A549 (cell line): ENCODE measurements at regions of chr12 and their contacts with region 1.

Region 1: DNA sequence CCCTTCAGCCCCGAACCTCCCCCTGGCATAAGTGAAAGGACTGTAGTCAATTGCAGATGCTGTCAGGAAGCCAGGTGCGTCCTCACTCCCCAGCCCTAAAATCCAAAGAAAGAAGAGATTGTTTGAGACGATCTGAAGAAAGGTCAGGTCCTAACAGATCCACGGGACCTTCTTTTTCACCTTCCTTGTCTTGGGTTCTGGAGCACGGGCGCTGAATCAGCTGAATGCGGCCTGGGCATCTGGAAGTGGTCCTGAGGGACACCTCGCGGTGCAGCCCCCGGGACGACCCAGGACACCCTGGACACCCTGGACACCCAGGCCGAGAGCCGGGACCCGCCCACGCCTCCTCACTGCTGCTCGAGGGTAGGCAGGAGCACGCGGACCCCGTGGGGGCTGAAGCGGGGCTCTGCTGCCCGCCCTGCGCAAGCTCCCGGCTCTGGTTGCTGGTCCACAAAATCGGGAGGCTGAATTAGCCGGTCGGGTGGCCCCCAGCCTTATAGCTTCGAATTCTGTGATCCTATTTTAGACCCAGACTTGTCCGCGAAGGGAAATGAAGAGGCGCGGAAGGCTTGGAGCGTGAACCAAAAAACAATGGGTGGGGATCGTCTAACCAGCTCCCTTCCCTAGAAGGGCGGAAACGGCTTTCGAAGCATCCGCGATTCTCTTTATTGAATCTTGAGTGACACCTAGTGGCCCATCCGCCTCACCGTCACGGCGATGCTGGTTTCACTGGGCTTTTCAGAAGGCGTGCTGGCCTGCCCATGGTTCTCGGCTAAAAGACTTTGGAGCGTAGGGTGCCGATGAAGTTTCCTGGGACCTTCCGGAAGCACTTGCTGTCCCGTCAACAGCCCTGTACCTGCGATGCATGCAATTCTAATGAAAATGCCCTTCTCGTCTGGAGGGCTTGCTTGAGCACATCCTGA is 46.4 kb upstream of the PLXNC1 start:
- DNase-seq: peak; percentile 66 to 90
- ATAC-seq: peak; percentile 78 to 90
- H3K4me3 ChIP-seq: peak overlapping the region; percentile 61
- H3K27ac ChIP-seq: peak overlapping the region; percentile 77 to 85
- H3K4me1 ChIP-seq: peaks cover 28% of the 10 kb centered on the region; the same call in 2 of the 3 replicates
- CTCF ChIP-seq: peak; percentile 77
- EP300 ChIP-seq: no peak
- POLR2A ChIP-seq: no peak
- RAD21 ChIP-seq: peak; percentile 93

Region 2: GRCh38 chr12:92987362-92987761 is 1114.6 kb before region 1 on chr12:
- CTCF ChIA-PET with region 1: interaction called, 21 read pairs
- POLR2A ChIA-PET with region 1: no interaction called
- DNase-seq: peak; percentile 61 to 71
- ATAC-seq: peak; percentile 88 to 92; a peak in 5 of 6 replicates
- H3K4me3 ChIP-seq: no peak overlapping the region
- H3K27ac ChIP-seq: peak overlapping the region; percentile 6 to 37; a peak in 3 of 6 replicates
- H3K4me1 ChIP-seq: peaks cover 6% of the 10 kb centered on the region; the same call in 2 of the 3 replicates
- CTCF ChIP-seq: peak; percentile 74
- EP300 ChIP-seq: no peak
- POLR2A ChIP-seq: no peak
- RAD21 ChIP-seq: peak; percentile 88 to 90

Region 3: DNA sequence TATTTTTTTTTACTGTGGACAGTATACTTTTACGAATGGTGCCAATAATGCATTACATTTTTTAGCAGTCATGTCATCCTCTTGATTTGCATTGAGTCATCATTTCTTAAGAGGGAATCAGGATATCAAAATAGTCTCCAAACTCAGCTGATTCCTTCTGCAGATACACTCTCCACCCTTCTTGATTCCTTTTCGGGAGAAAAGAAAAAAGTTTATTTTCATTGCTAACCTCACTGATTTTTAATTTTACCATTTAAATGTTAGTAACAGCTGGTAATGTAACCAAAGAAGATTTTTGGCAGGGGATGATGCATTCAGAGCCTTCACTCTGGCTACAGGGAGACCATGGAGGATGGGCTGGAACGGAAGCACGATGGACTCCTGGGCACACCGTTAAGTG is 587.1 kb before region 1 on chr12:
- CTCF ChIA-PET with region 1: interaction called, 334 read pairs
- POLR2A ChIA-PET with region 1: no interaction called
- DNase-seq: no peak
- ATAC-seq: peak; percentile 30 to 68; a peak in 3 of 6 replicates
- H3K4me3 ChIP-seq: no peak overlapping the region
- H3K27ac ChIP-seq: no peak overlapping the region
- H3K4me1 ChIP-seq: peaks cover 14% of the 10 kb centered on the region; the same call in 1 of the 3 replicates
- CTCF ChIP-seq: no peak
- EP300 ChIP-seq: no peak
- POLR2A ChIP-seq: no peak
- RAD21 ChIP-seq: no peak

Region 4: DNA sequence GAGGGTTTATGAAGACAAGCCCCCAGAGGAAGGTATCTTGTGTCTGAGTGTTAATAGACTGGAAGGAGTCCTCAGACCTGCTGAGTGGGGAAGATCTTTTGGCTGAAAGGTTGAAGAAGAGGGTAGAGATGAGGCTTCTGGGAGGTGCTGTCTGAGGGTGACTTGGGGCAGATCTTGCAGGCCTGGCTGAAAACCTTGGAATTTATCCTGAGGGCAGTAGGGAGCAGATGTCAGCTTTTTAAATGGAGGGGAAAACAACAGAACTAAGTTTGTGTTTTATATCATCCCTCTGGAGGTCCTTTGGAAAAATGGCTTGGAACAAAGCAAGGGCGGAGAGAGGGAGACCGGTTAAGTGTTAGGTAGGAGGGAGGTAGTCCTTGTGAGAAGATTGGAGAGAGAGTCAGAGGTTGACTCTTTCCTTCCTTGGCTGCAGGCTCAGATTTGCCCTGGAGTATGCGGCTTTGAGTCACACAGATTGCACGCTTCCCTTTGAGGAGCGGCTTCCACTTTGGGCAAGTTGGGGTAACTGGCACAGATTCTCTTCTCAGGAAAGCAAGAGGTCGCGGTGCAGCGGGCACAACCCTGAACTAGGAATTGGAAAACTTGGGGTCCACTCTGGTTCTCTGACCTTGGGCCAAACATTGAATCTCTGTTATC is 519.8 kb before region 1 on chr12:
- CTCF ChIA-PET with region 1: interaction called, 39 read pairs
- POLR2A ChIA-PET with region 1: no interaction called
- DNase-seq: no peak
- ATAC-seq: no peak
- H3K4me3 ChIP-seq: no peak overlapping the region
- H3K27ac ChIP-seq: no peak overlapping the region
- H3K4me1 ChIP-seq: no peaks in the 10 kb centered on the region
- CTCF ChIP-seq: no peak
- EP300 ChIP-seq: no peak
- POLR2A ChIP-seq: no peak
- RAD21 ChIP-seq: no peak

Region 5: GRCh38 chr12:93742110-93742934 is 359.7 kb before region 1 on chr12:
- CTCF ChIA-PET with region 1: interaction called, 58 read pairs
- POLR2A ChIA-PET with region 1: no interaction called
- DNase-seq: peak; percentile 71 to 81
- ATAC-seq: peak; percentile 98
- H3K4me3 ChIP-seq: peak overlapping the region; percentile 59
- H3K27ac ChIP-seq: peak overlapping the region; percentile 73 to 87
- H3K4me1 ChIP-seq: peaks cover 21% of the 10 kb centered on the region
- CTCF ChIP-seq: peak; percentile 88
- EP300 ChIP-seq: no peak
- POLR2A ChIP-seq: no peak
- RAD21 ChIP-seq: peak; percentile 36 to 80

Region 6: GRCh38 chr12:93790472-93791152 is 311.4 kb before region 1 on chr12:
- CTCF ChIA-PET with region 1: interaction called, 44 read pairs
- POLR2A ChIA-PET with region 1: interaction called, 8 read pairs
- DNase-seq: peak; percentile 6 to 60
- ATAC-seq: no peak
- H3K4me3 ChIP-seq: no peak overlapping the region
- H3K27ac ChIP-seq: peak overlapping the region; percentile 27 to 89; a peak in 5 of 6 replicates
- H3K4me1 ChIP-seq: peaks cover 29% of the 10 kb centered on the region
- CTCF ChIP-seq: no peak
- EP300 ChIP-seq: no peak
- POLR2A ChIP-seq: no peak
- RAD21 ChIP-seq: no peak

Region 7: DNA sequence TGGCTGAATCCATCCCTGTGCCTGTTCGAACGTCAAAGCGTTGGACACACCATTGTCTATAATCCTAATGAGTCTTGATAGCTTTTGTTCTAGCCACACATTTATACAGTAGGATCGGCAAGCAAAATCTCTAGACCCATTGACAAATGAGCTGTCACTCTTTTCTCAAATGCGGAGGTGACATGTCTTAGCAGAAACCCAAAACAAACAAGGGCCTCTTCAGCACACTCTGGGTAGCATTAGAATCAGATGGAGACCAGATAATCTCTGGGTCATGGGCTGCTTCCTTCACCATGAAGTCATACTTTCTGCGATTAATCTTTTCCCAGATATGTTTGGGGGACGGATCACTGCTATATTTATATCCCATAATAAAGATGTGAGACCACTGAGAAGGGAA is 146.6 kb after region 1 on chr12:
- CTCF ChIA-PET with region 1: no interaction called
- POLR2A ChIA-PET with region 1: no interaction called
- DNase-seq: no peak
- ATAC-seq: no peak
- H3K4me3 ChIP-seq: no peak overlapping the region
- H3K27ac ChIP-seq: no peak overlapping the region
- H3K4me1 ChIP-seq: no peaks in the 10 kb centered on the region
- CTCF ChIP-seq: no peak
- EP300 ChIP-seq: no peak
- POLR2A ChIP-seq: no peak
- RAD21 ChIP-seq: no peak